B cell (primary cell): ENCODE measurements at regions of chr17 and their contacts with region 1.

Region 1: DNA sequence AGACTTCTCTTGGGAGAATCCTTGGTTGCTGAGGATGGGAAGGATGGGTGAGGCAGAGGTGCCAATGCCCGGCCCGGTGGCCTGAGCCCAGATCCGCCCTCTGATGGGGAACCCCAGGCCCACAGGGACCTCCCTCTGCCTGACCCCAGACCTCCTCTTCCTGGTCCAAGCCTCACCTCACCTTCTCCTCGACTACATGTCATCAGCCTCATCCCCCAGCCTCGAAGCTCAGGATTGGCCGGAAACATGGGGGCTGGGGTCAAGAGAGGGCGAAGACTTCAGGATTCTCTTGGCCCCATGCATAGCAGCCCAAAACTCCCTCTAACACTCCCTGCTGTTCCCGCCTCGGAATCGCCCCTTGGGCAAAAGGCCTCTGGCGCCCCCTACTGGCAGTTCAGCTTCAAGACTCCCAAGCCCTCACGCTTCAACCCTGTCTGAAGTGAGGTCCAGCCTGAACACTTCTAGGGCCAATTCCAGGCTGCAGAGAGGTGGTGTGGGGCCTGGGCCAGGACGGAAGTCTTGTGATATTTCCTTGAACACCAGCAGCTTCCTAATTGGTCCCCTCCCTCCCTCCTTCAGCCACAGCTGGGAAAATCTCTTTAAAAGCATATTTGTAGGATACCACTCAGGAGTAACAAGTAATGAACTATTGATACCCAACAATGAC is 47.2 kb downstream of the ARHGAP27 start:
- DNase-seq: peak; percentile 89
- ATAC-seq: peak; percentile 96
- H3K4me3 ChIP-seq: no peak overlapping the region
- H3K4me3 Mint-ChIP-seq: no peak overlapping the region
- H3K27ac ChIP-seq: no peak overlapping the region
- H3K27ac Mint-ChIP-seq: peak overlapping the region; percentile 16
- H3K4me1 ChIP-seq: peaks cover 5 to 12% of the 10 kb centered on the region in 2 donors
- H3K4me1 Mint-ChIP-seq: peaks cover 17% of the 10 kb centered on the region
- H3K27me3 ChIP-seq: peaks cover 0 to 12% (median 2%) of the 10 kb centered on the region in 4 experiments
- H3K27me3 Mint-ChIP-seq: peaks cover 16% of the 10 kb centered on the region
- CTCF ChIP-seq: peak; percentile 98

Region 2: DNA sequence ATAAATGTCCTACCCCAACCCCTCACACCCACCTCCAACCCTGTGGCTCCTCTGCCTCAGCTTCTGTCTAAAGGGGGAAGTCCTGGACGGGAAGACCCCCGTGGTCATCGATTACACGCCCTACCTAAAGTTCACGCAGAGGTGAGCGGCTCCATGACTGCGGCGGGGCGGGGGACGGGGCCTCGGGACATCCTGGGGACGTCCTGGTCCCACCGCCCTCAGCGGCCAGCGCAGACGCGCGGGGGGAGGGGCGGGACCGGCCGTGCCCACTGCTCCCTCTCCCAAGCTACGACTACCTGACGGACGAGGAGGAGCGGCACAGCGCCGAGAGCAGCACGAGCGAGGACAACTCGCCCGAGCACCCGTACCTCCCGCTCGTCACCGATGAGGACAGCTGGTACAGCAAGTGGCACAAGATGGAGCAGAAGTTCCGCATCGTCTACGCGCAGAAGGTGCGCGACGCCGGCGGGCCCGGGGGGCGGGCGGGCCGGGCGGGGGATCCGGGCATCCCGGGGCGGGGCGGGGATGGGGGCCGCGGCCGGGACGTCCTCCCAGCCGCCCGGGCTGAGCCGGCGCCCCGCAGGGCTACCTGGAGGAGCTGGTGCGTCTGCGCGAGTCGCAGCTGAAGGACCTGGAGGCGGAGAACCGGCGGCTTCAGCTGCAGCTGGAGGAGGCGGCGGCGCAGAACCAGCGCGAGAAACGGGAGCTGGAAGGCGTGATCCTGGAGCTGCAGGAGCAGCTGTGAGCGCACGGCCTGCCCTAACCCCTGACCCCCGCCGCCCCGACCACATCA is 1070.4 kb before region 1 on chr17:
- CTCF ChIA-PET with region 1: no interaction called
- POLR2A ChIA-PET with region 1: no interaction called
- intact Hi-C with region 1: no loop called
- DNase-seq: peak; percentile 55
- ATAC-seq: peak; percentile 59
- H3K4me3 ChIP-seq: peak overlapping the region in 4 of 5 experiments; percentile 28 to 62 (median 50)
- H3K4me3 Mint-ChIP-seq: peak overlapping the region; percentile 80
- H3K27ac ChIP-seq: no peak overlapping the region
- H3K27ac Mint-ChIP-seq: peak overlapping the region; percentile 34
- H3K4me1 ChIP-seq: peaks cover 19 to 25% of the 10 kb centered on the region in 2 donors
- H3K4me1 Mint-ChIP-seq: peaks cover 18% of the 10 kb centered on the region
- H3K27me3 ChIP-seq: peaks cover 0 to 46% (median 22%) of the 10 kb centered on the region in 4 experiments
- H3K27me3 Mint-ChIP-seq: peaks cover 37% of the 10 kb centered on the region
- CTCF ChIP-seq: no peak

Region 3: DNA sequence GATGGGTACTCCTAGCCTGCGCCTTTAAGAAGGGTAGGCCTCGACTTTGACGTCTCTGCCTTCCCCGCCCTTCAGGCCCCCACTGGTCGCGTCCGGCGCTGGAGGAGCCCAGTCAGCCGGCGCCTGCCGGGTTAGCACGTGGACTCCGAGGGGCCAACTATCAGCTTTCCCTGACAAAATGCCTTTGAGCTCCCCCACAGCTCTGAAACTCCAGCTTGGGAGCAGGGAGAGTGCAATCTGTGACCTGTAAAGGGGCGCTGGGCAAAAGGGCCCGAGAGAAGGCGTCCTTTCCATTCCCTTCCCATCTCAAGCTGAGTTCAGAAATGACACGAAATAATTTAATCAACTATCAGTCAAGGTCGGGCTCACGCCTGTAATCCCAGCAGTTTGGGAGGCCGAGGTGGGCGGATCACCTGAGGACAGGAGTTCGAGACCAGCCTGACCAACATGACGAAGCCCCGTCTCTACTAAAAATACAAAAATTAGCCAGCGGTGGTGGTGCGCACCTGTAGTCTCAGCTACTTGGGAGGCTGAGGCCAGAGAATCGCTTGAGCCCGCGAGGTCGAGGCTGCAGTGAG is 1058.5 kb before region 1 on chr17:
- CTCF ChIA-PET with region 1: no interaction called
- POLR2A ChIA-PET with region 1: no interaction called
- intact Hi-C with region 1: no loop called
- DNase-seq: peak; percentile 94
- ATAC-seq: peak; percentile 68
- H3K4me3 ChIP-seq: peak overlapping the region; percentile 11 to 79 (median 34)
- H3K4me3 Mint-ChIP-seq: peak overlapping the region; percentile 77
- H3K27ac ChIP-seq: peak overlapping the region in 1 of 2 donors; percentile 56
- H3K27ac Mint-ChIP-seq: peak overlapping the region; percentile 84
- H3K4me1 ChIP-seq: peaks cover 9 to 39% of the 10 kb centered on the region in 2 donors
- H3K4me1 Mint-ChIP-seq: peaks cover 39% of the 10 kb centered on the region
- H3K27me3 ChIP-seq: no peaks in the 10 kb centered on the region
- H3K27me3 Mint-ChIP-seq: no peaks in the 10 kb centered on the region
- CTCF ChIP-seq: no peak

Region 4: GRCh38 chr17:45228763-45229539 is 156.5 kb before region 1 on chr17:
- CTCF ChIA-PET with region 1: interaction called, 26 read pairs
- POLR2A ChIA-PET with region 1: interaction called, 3 read pairs
- intact Hi-C with region 1: no loop called
- DNase-seq: peak; percentile 94
- ATAC-seq: peak; percentile 52
- H3K4me3 ChIP-seq: peak overlapping the region; percentile 8 to 96 (median 90)
- H3K4me3 Mint-ChIP-seq: peak overlapping the region; percentile 100
- H3K27ac ChIP-seq: peak overlapping the region; percentile 99 to 100
- H3K27ac Mint-ChIP-seq: peak overlapping the region; percentile 99
- H3K4me1 ChIP-seq: peaks cover 70 to 90% of the 10 kb centered on the region in 2 donors
- H3K4me1 Mint-ChIP-seq: peaks cover 95% of the 10 kb centered on the region
- H3K27me3 ChIP-seq: no peaks in the 10 kb centered on the region
- H3K27me3 Mint-ChIP-seq: no peaks in the 10 kb centered on the region
- CTCF ChIP-seq: no peak

Region 5: GRCh38 chr17:45235416-45236281 is 149.8 kb before region 1 on chr17:
- CTCF ChIA-PET with region 1: interaction called, 26 read pairs
- POLR2A ChIA-PET with region 1: no interaction called
- intact Hi-C with region 1: loop called (anchors 1 kb)
- DNase-seq: peak; percentile 87
- ATAC-seq: peak; percentile 56
- H3K4me3 ChIP-seq: no peak overlapping the region
- H3K4me3 Mint-ChIP-seq: no peak overlapping the region
- H3K27ac ChIP-seq: peak overlapping the region; percentile 0 to 43
- H3K27ac Mint-ChIP-seq: peak overlapping the region; percentile 82
- H3K4me1 ChIP-seq: peaks cover 18 to 45% of the 10 kb centered on the region in 2 donors
- H3K4me1 Mint-ChIP-seq: peaks cover 47% of the 10 kb centered on the region
- H3K27me3 ChIP-seq: no peaks in the 10 kb centered on the region
- H3K27me3 Mint-ChIP-seq: no peaks in the 10 kb centered on the region
- CTCF ChIP-seq: peak; percentile 83

Region 6: GRCh38 chr17:45284176-45285140 is 101.0 kb before region 1 on chr17:
- CTCF ChIA-PET with region 1: interaction called, 520 read pairs
- POLR2A ChIA-PET with region 1: interaction called, 5 read pairs
- intact Hi-C with region 1: no loop called
- DNase-seq: peak; percentile 50
- ATAC-seq: peak; percentile 65
- H3K4me3 ChIP-seq: no peak overlapping the region
- H3K4me3 Mint-ChIP-seq: no peak overlapping the region
- H3K27ac ChIP-seq: peak overlapping the region in 1 of 2 donors; percentile 35
- H3K27ac Mint-ChIP-seq: peak overlapping the region; percentile 61
- H3K4me1 ChIP-seq: peaks cover 0 to 8% of the 10 kb centered on the region in 2 donors
- H3K4me1 Mint-ChIP-seq: peaks cover 4% of the 10 kb centered on the region
- H3K27me3 ChIP-seq: no peaks in the 10 kb centered on the region
- H3K27me3 Mint-ChIP-seq: no peaks in the 10 kb centered on the region
- CTCF ChIP-seq: peak; percentile 33

Region 7: DNA sequence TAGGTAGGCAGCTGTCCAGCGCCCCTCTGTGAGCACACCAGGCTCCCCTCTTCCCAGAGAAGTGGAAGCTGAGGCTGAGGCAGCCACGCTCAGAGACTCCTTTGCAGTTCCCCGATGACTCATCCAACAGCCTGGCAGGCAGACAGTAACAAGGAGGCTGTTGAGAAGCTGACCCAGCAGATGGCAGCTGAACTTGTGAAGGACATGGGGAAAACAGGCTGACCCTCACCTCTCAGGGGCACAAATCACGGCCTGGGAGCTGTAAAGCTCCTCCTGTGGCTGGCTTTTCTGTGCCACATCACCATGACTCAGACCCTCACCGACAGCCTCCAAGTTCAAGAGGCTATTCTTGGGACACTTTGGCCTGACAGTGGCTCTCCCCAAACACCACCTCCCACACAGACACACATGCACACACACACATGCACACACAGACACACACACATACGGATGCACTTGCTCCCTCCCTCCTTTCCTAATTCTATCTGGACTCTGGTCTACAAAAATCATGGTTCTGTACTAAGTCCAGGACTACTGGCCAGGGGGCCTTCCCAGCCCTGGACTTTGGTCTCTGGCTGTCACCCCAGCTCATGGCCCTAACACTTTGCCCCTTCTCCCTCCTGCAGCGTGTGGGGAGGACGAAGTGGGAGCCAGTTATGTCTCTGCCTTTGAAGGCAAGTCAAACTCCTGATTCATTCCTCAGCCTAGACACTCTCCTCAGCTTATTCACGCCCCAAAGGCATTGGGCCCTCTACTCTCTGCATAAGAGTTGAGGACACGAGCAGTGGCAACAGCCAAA is 91.9 kb before region 1 on chr17:
- CTCF ChIA-PET with region 1: interaction called, 12 read pairs
- POLR2A ChIA-PET with region 1: no interaction called
- intact Hi-C with region 1: loop called (anchors 5 kb)
- DNase-seq: no peak
- ATAC-seq: no peak
- H3K4me3 ChIP-seq: no peak overlapping the region
- H3K4me3 Mint-ChIP-seq: peak overlapping the region; percentile 56
- H3K27ac ChIP-seq: no peak overlapping the region
- H3K27ac Mint-ChIP-seq: peak overlapping the region; percentile 86
- H3K4me1 ChIP-seq: peaks cover 75 to 84% of the 10 kb centered on the region in 2 donors
- H3K4me1 Mint-ChIP-seq: peaks cover 78% of the 10 kb centered on the region
- H3K27me3 ChIP-seq: no peaks in the 10 kb centered on the region
- H3K27me3 Mint-ChIP-seq: no peaks in the 10 kb centered on the region
- CTCF ChIP-seq: no peak